CD8-positive, alpha-beta T cell (primary cell): ENCODE measurements at regions of chr2 and their contacts with region 1.

Region 1: DNA sequence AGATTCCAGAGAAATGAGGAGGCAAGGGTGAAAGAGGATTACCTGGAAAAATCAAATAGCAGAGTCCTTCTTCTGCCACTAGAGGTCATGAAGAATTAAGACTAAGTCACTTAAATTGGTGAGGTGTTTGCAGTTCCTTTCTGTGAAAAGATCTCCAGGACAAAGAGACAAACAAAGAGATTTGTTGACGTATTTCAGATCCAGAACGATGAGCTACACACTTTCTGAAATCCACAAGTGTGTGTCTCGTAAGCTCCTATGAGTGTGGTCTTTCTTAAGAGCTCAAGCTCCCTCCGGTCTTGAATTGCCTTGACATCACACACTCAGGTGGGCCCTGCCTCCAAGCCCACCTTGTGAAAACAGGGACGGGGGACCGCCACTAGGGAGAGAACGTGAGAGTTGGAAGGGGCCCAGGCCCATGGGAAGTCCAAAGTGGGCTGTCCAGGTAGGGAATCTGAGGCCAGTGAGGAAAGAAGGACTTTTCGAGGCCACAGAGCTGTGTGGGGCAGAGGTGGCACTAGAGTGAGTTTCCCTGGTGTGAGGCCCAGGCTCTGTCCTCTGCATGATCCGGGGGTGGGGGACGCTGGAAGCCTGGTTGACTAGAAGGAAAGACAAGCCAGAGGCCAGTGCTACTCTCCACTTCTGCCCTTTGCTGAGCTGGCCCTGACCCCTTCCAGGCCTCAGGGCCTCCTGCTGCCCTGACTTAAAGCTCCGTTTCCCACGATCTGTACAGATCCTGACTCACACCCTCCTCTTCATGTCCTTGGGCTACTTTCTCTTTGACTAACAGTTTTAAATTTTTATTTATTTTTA is 168.1 kb upstream of the NCK2 start:
- DNase-seq: peak in 3 of 9 experiments; percentile 49 to 64 (median 56)
- ATAC-seq: peak; percentile 71
- H3K4me3 ChIP-seq: no peak overlapping the region
- H3K4me3 Mint-ChIP-seq: no peak overlapping the region
- H3K27ac ChIP-seq: no peak overlapping the region
- H3K27ac Mint-ChIP-seq: peak overlapping the region; percentile 85
- H3K4me1 ChIP-seq: peaks cover 12% of the 10 kb centered on the region
- H3K4me1 Mint-ChIP-seq: peaks cover 37% of the 10 kb centered on the region
- H3K27me3 ChIP-seq: no peaks in the 10 kb centered on the region
- H3K27me3 Mint-ChIP-seq: no peaks in the 10 kb centered on the region
- CTCF ChIP-seq: peak; percentile 76

Region 2: DNA sequence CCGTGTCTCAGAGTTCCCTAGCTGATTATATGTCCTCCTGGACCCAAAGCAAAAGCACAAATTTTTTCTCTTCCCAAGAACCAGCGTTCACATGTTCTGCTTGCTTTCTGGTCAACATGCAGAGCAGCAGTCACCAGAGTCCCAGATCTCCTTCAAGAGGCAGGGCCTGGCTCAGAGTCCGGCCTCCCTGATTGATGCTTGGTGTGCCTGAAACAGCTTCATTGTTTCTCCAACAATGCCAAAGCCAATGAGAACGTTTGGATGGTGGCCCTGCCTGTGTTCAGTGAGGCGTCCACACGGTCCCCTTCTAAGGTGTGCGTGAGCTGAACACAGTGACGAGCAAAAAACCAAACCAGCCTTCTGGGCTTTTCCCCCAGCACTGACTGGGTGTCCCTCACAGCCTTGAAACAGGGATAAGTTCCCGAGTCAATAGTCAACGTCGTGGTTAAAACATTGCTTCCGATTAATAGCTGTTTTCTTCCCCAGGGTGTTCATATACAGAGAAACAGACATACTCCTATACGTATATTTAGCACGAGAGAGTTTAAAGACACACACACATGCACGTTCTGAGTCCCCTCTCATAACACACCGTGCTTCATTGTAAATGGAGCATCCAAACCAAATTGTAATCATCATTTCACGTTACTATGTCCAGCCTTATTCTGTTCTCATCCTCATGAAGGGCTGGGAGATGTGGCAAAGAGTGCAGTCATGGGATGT is 742.1 kb before region 1 on chr2:
- CTCF ChIA-PET with region 1: no interaction called
- POLR2A ChIA-PET with region 1: no interaction called
- intact Hi-C with region 1: no loop called
- DNase-seq: no peak
- ATAC-seq: no peak
- H3K4me3 ChIP-seq: no peak overlapping the region
- H3K4me3 Mint-ChIP-seq: no peak overlapping the region
- H3K27ac ChIP-seq: no peak overlapping the region
- H3K27ac Mint-ChIP-seq: no peak overlapping the region
- H3K4me1 ChIP-seq: no peaks in the 10 kb centered on the region
- H3K4me1 Mint-ChIP-seq: no peaks in the 10 kb centered on the region
- H3K27me3 ChIP-seq: no peaks in the 10 kb centered on the region
- H3K27me3 Mint-ChIP-seq: peaks cover 14% of the 10 kb centered on the region
- CTCF ChIP-seq: no peak

Region 3: DNA sequence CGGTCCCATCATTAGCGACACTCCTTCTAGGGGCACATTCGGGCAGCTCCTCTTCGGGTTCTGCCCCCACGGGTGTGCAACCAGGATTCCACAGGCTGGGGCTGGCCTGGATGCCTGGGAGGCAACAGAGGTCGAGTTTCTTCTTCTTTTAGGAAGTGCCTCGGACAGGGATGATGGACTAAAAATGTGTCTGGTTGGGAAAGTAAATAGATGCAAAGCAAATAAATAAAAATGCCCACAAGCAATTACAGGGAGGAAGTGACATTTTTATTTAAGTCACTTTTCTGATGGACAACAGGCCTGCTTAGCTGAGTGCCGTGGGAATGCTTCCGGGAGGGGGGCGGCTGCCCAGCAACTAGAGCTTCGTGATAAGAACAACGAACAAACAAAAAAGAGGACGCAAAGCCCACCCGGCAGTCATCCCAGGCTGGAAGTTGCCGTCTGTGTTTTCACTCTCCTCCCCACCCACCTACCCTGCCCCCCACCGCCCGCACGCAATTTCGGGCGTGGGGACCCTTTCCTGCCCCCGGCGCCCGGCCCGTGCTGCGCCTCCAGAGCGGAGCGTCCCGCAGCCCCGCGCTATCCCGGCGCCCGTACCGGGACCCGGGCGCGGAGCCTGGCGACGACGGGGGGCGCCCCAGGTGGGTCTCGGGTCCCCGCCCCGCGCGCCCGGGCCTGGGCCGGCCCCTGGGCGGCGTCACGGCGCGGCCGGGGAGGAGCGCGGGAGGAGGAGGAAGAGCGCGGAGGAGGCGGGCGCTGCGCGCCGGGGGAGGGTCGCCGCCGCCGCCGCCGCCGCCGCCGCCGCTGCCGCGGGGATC is 167.7 kb after region 1 on chr2:
- CTCF ChIA-PET with region 1: interaction called, 8 read pairs
- POLR2A ChIA-PET with region 1: interaction called, 4 read pairs
- intact Hi-C with region 1: loop called in 1 of 2 experiments (anchors 5 kb)
- DNase-seq: peak; percentile 37 to 87 (median 70)
- ATAC-seq: peak; percentile 74
- H3K4me3 ChIP-seq: peak overlapping the region; percentile 31 to 49
- H3K4me3 Mint-ChIP-seq: peak overlapping the region; percentile 86
- H3K27ac ChIP-seq: peak overlapping the region; percentile 31 to 51
- H3K27ac Mint-ChIP-seq: peak overlapping the region; percentile 94
- H3K4me1 ChIP-seq: peaks cover 58% of the 10 kb centered on the region
- H3K4me1 Mint-ChIP-seq: peaks cover 78% of the 10 kb centered on the region
- H3K27me3 ChIP-seq: no peaks in the 10 kb centered on the region
- H3K27me3 Mint-ChIP-seq: no peaks in the 10 kb centered on the region
- CTCF ChIP-seq: no peak

Region 4: GRCh38 chr2:105782123-105782522 is 205.5 kb after region 1 on chr2:
- CTCF ChIA-PET with region 1: interaction called, 14 read pairs
- POLR2A ChIA-PET with region 1: no interaction called
- intact Hi-C with region 1: loop called (anchors 2 to 5 kb)
- DNase-seq: peak in 3 of 9 experiments; percentile 40 to 66 (median 57)
- ATAC-seq: peak; percentile 41
- H3K4me3 ChIP-seq: no peak overlapping the region
- H3K4me3 Mint-ChIP-seq: peak overlapping the region; percentile 81
- H3K27ac ChIP-seq: peak overlapping the region in 1 of 2 experiments; percentile 31
- H3K27ac Mint-ChIP-seq: peak overlapping the region; percentile 98
- H3K4me1 ChIP-seq: peaks cover 99% of the 10 kb centered on the region
- H3K4me1 Mint-ChIP-seq: peaks cover 94% of the 10 kb centered on the region
- H3K27me3 ChIP-seq: no peaks in the 10 kb centered on the region
- H3K27me3 Mint-ChIP-seq: no peaks in the 10 kb centered on the region
- CTCF ChIP-seq: peak; percentile 62

Region 5: DNA sequence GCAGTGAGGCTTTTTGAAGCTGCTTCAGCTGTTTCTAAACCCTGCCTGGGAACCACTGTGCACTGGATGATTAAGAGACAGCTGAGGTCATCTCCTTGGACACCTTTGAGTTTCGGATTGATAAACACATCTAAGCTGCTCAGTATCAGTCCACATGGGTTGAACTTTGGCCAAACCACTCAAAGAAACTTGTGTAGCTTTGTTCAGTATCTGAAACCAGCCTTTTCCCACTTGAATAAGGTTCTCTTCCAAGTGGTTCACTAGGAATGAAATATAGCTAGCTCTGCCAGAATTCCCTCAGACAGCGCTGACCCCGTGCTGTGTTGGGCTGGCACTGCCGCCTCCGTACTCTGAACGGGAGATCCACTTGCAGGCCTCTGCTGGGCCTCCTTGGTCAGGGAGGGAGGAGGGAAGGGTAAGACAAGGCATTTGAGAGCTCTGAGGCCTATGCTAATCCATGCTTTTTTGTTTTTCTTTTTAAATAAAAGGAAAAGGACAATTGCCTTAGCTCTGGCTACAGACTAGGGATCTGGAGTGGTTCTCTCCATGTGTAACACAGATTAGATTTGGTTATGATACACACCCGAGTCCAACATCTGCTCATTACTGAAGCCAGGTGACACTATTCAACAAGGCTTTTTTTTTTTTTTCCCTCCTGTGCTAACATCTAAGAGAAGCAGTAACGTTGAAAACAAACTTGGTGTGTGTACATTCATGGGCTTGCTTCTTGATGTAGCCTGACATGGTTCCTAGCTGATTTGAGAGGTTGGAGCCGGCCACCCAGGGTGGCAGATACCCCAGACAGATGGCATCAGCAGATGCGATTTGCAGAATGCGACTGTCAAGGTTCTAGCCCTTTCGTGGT is 235.8 kb after region 1 on chr2:
- CTCF ChIA-PET with region 1: no interaction called
- POLR2A ChIA-PET with region 1: no interaction called
- intact Hi-C with region 1: no loop called
- DNase-seq: no peak
- ATAC-seq: no peak
- H3K4me3 ChIP-seq: no peak overlapping the region
- H3K4me3 Mint-ChIP-seq: no peak overlapping the region
- H3K27ac ChIP-seq: no peak overlapping the region
- H3K27ac Mint-ChIP-seq: peak overlapping the region; percentile 77
- H3K4me1 ChIP-seq: peaks cover 89% of the 10 kb centered on the region
- H3K4me1 Mint-ChIP-seq: peaks cover 93% of the 10 kb centered on the region
- H3K27me3 ChIP-seq: no peaks in the 10 kb centered on the region
- H3K27me3 Mint-ChIP-seq: no peaks in the 10 kb centered on the region
- CTCF ChIP-seq: no peak

Region 6: GRCh38 chr2:105866216-105867185 is 289.9 kb after region 1 on chr2:
- CTCF ChIA-PET with region 1: no interaction called
- POLR2A ChIA-PET with region 1: no interaction called
- intact Hi-C with region 1: loop called in 1 of 2 experiments (anchors 10 kb)
- DNase-seq: no peak
- ATAC-seq: no peak
- H3K4me3 ChIP-seq: no peak overlapping the region
- H3K4me3 Mint-ChIP-seq: no peak overlapping the region
- H3K27ac ChIP-seq: no peak overlapping the region
- H3K27ac Mint-ChIP-seq: peak overlapping the region; percentile 70
- H3K4me1 ChIP-seq: peaks cover 90% of the 10 kb centered on the region
- H3K4me1 Mint-ChIP-seq: peaks cover 93% of the 10 kb centered on the region
- H3K27me3 ChIP-seq: no peaks in the 10 kb centered on the region
- H3K27me3 Mint-ChIP-seq: no peaks in the 10 kb centered on the region
- CTCF ChIP-seq: no peak

Region 7: GRCh38 chr2:106085181-106085940 is 508.7 kb after region 1 on chr2:
- CTCF ChIA-PET with region 1: interaction called, 19 read pairs
- POLR2A ChIA-PET with region 1: no interaction called
- intact Hi-C with region 1: loop called in 1 of 2 experiments (anchors 5 kb)
- DNase-seq: peak in 7 of 9 experiments; percentile 44 to 81 (median 75)
- ATAC-seq: peak; percentile 94
- H3K4me3 ChIP-seq: peak overlapping the region in 1 of 2 experiments; percentile 5
- H3K4me3 Mint-ChIP-seq: peak overlapping the region; percentile 66
- H3K27ac ChIP-seq: peak overlapping the region; percentile 46 to 59
- H3K27ac Mint-ChIP-seq: peak overlapping the region; percentile 98
- H3K4me1 ChIP-seq: peaks cover 56% of the 10 kb centered on the region
- H3K4me1 Mint-ChIP-seq: peaks cover 72% of the 10 kb centered on the region
- H3K27me3 ChIP-seq: no peaks in the 10 kb centered on the region
- H3K27me3 Mint-ChIP-seq: no peaks in the 10 kb centered on the region
- CTCF ChIP-seq: peak; percentile 57